ENCODE measurements at regions of chr19 and their contacts with region 1.

Region 1: DNA sequence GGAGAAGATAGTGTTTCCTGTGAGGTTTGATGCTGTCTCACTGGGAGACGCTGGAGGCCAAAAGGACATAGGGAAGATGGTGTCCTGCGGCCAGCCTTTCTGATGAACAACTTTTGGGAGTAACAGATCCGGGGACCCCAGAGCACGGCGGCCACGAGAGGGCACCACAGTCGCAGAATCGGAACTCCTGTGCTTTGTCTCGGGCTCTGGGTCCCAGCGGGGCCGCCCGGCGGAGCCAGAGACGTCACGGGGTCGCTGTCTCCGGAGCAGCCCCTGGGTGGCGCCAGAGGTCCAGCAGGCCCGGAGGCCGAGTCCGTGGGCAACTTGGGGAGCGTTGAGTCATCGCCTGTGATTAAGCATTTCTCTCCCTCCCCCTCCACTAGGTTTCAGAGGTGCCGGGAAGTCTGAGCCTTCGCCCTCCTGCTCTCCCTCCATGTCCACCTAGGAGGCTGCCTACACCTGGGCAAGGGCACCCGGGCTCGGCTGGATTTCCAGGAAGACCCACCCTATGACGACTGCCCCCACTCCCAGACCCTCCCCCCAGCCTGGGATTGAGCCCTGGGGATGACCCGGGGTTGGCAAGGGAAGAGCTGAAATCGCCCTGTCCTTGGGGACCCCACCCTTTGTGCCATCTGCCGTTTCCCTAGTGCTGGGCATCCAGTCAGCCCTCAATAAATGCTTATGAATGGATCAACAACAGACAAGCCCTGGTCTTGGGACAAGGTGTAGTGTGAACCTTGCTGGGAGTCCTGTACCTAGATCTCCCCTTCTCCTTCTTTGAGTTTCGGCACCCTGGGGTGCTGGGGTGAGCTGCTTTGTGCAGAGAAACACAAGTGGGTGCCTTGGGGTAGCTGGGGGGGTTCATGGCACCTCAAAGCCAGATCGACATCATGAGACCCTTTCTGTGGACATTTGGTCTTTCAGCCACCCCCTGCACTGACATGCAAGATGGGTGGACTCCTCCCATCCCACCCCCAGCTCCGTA is 3.4 kb downstream of the NANOS3 start:
- DNase-seq: peak; percentile 98 to 100 (median 99)
- ATAC-seq: peak; percentile 95
- H3K4me3 ChIP-seq: no peak overlapping the region
- H3K27ac ChIP-seq: peak overlapping the region; percentile 6
- H3K4me1 ChIP-seq: peaks cover 2% of the 10 kb centered on the region
- H3K27me3 ChIP-seq: no peaks in the 10 kb centered on the region

Region 2: GRCh38 chr19:13833330-13834243 is 46.8 kb before region 1 on chr19:
- intact Hi-C with region 1: no loop called
- DNase-seq: peak; percentile 96 to 99 (median 98)
- ATAC-seq: peak; percentile 80 to 89
- H3K4me3 ChIP-seq: no peak overlapping the region
- H3K27ac ChIP-seq: peak overlapping the region; percentile 43
- H3K4me1 ChIP-seq: peaks cover 10% of the 10 kb centered on the region
- H3K27me3 ChIP-seq: no peaks in the 10 kb centered on the region

Region 3: DNA sequence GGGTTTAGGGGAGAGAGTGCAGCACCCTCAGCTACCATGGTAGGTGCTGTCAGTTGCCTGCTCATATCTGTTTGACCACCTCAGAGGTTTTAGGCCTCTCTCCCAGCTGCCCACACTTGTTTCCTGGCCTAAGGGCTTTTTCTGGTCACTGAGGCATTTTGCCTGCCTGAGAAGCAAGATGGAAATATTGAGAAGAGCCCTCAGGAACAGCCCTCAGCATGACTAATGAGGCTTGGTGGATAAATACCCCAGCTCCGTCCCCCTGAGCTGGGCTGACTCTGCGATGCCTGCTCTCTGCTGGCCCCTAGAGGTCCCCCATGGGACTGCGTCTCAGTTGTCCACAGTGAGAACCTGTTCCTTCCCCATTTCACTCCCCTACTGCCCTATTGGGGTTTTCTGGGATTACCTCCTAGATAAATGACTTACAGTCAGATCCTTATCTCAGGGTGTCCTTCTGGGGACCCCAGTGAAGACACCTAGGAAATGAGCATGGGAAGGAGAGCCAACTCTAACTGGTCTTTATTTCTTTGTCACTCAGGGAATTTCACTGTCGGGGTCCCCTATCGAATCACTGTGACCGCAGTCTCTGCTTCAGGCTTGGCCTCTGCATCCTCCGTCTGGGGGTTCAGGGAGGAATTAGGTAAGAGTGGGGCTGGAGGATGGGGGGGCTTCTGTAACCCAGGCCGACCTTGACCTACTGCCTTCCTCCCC is 168.2 kb after region 1 on chr19:
- intact Hi-C with region 1: loop called in 1 of 4 experiments (anchors 10 kb)
- DNase-seq: peak; percentile 46 to 82 (median 80)
- ATAC-seq: peak; percentile 49 to 56
- H3K4me3 ChIP-seq: no peak overlapping the region
- H3K27ac ChIP-seq: no peak overlapping the region
- H3K4me1 ChIP-seq: no peaks in the 10 kb centered on the region
- H3K27me3 ChIP-seq: no peaks in the 10 kb centered on the region

Region 4: DNA sequence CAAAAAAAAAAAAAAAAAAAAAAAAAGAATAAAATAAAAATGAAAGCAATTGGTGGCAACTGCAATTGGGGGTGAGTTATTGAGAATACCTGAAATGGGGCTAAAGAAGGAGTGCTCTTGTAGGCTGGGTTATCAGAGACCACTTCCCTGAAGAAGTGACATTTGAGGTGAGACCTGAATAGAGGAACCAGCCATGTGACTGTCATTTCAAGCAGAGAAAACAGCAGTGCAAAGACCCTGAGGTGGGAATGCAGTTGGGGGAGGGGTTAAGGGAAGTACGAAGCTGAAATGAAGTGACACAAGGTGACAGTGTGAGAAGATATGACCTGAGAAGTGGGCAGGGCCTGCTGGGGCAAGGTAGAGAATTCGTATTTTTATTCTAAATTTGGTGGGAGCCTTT is 185.8 kb after region 1 on chr19:
- intact Hi-C with region 1: loop called in 2 of 4 experiments (anchors 5 kb)
- DNase-seq: no peak
- ATAC-seq: no peak
- H3K4me3 ChIP-seq: no peak overlapping the region
- H3K27ac ChIP-seq: no peak overlapping the region
- H3K4me1 ChIP-seq: no peaks in the 10 kb centered on the region
- H3K27me3 ChIP-seq: no peaks in the 10 kb centered on the region

Region 5: GRCh38 chr19:14073261-14073924 is 193.0 kb after region 1 on chr19:
- intact Hi-C with region 1: loop called (anchors 2 to 5 kb)
- DNase-seq: peak; percentile 79 to 92 (median 92)
- ATAC-seq: peak; percentile 55 to 58
- H3K4me3 ChIP-seq: peak overlapping the region; percentile 68
- H3K27ac ChIP-seq: peak overlapping the region; percentile 84
- H3K4me1 ChIP-seq: peaks cover 2% of the 10 kb centered on the region
- H3K27me3 ChIP-seq: no peaks in the 10 kb centered on the region

Measured in right cardiac atrium (tissue), 5 donors.